ENCODE measurements at regions of chr5 and their contacts with region 1.

Region 1: DNA sequence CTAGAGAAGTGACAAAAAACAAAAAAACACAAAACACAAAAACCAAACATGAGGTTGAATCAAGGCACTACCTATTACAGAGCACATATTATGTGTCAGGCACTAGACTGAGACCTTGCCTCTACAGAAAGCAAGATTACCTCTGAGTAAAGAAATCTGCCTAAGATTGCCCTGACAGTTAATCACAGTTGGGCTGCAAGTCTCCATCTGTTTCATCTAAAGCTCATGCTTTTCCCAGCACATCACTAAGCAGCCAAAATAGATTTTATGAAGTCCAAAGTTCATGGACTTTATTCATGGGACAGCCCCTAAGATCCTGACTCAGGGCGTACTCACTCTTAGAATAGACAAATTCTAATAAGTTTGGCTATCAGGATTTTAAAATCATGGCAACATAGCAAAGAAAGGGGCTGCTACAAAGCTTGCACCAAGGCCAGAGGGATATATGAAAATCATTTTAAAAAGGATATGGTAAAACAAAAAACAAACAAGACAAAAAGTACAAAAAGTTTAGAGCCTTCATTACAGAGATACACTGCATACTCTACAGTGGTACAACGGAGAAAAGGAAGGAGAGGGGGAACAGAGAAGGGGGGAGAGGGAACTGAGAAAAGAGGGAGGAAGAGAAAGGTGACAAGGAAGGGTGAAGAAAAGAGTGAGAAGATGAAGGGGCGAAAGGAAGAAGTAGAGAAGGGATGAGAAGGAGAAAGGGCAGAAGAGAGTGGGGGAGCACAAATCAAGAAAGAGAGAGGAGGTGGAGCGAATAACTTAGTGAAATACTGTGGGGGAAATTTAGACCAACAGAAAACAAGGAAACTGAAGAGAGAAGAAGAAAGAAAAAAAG is 58.2 kb downstream of the RICTOR start:
- DNase-seq: no peak
- ATAC-seq: peak; percentile 93
- H3K4me3 Mint-ChIP-seq: no peak overlapping the region
- H3K27ac Mint-ChIP-seq: peak overlapping the region; percentile 24
- H3K4me1 Mint-ChIP-seq: peaks cover 37% of the 10 kb centered on the region
- H3K27me3 Mint-ChIP-seq: no peaks in the 10 kb centered on the region

Region 2: GRCh38 chr5:38666668-38667498 is 349.1 kb before region 1 on chr5:
- CTCF ChIA-PET with region 1: no interaction called
- POLR2A ChIA-PET with region 1: no interaction called
- intact Hi-C with region 1: no loop called
- DNase-seq: peak; percentile 12
- ATAC-seq: no peak
- H3K4me3 Mint-ChIP-seq: no peak overlapping the region
- H3K27ac Mint-ChIP-seq: no peak overlapping the region
- H3K4me1 Mint-ChIP-seq: no peaks in the 10 kb centered on the region
- H3K27me3 Mint-ChIP-seq: peaks cover 18% of the 10 kb centered on the region

Region 3: GRCh38 chr5:38755179-38755578 is 260.8 kb before region 1 on chr5:
- CTCF ChIA-PET with region 1: no interaction called
- POLR2A ChIA-PET with region 1: no interaction called
- intact Hi-C with region 1: loop called in 1 of 2 experiments (anchors 5 kb)
- DNase-seq: no peak
- ATAC-seq: no peak
- H3K4me3 Mint-ChIP-seq: no peak overlapping the region
- H3K27ac Mint-ChIP-seq: no peak overlapping the region
- H3K4me1 Mint-ChIP-seq: no peaks in the 10 kb centered on the region
- H3K27me3 Mint-ChIP-seq: peaks cover 14% of the 10 kb centered on the region

Region 4: DNA sequence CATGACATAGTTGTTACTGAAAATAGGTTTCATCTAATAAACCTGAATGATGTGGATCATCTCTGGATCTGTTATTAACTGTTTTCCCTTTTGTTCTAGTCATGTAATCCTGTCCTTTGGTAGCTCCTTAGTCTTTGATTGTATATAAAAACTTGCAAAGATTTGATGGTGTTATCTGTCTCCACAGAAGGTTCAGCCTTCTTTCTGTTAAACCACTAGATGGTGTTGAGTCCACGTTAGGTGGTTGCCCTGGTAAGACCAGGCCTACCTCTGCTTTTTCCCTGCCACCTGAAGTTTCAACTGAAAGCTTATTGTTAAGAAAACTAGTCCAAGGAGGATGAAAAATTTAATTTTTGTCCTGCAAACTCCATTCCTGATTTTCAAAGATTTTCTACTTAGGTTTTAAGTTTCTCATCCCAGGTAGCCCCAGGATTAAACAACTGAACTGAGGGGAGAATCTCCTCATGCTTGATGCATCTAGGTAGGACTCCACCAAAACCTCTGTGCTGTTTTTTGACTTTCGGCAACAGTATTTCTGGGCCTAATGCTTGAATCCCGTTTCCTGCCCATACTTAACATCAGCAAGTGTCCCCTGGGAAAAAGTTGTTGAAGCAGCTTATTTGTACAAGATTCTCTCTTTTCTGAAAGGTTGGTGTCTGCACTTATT is 10.3 kb before region 1 on chr5:
- CTCF ChIA-PET with region 1: interaction called, 12 read pairs
- POLR2A ChIA-PET with region 1: no interaction called
- intact Hi-C with region 1: no loop called
- DNase-seq: peak; percentile 13
- ATAC-seq: peak; percentile 60
- H3K4me3 Mint-ChIP-seq: no peak overlapping the region
- H3K27ac Mint-ChIP-seq: no peak overlapping the region
- H3K4me1 Mint-ChIP-seq: peaks cover 51% of the 10 kb centered on the region
- H3K27me3 Mint-ChIP-seq: no peaks in the 10 kb centered on the region